Lower leg skin (tissue), 4 donors: ENCODE measurements at regions of chr10 and their contacts with region 1.

Region 1: DNA sequence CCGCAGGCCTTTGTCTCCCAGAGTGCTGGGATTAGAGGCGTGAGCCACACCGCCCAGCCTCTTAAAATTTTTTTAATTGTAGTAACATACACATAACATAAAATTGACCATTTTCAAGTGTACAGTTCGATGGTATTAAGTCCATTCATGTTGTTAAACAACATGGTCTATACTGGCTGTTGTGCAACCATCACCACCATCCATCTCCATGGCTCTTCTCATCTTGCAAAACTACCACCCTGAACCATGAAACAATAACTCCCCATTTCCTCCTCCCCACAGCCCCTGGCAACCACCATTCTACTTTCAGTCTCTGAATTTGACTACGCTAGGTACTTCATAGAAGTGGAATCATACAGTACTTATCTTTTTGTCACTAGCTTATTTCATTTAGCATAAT is 7.9 kb upstream of the ZFYVE27 start:
- DNase-seq: no peak
- H3K4me3 ChIP-seq: no peak overlapping the region
- CTCF ChIP-seq: no peak
- POLR2A ChIP-seq: no peak

Region 2: GRCh38 chr10:97713339-97714047 is 15.5 kb before region 1 on chr10 and contains the start of gene MARVELD1:
- intact Hi-C with region 1: loop called (anchors 2 kb)
- DNase-seq: peak; percentile 71 to 96
- H3K4me3 ChIP-seq: peak within 1 kb of the TSS; percentile 35
- CTCF ChIP-seq: no peak
- POLR2A ChIP-seq: no peak
- total RNA-seq, gene MARVELD1: 22.5 to 50.2 (median 30.3) TPM